Posterior cingulate gyrus (tissue), 11 donors: ENCODE measurements at regions of chr2 and their contacts with region 1.

Region 1: GRCh38 chr2:19362755-19363473 is 4.5 kb upstream of the OSR1 start:
- DNase-seq: peak in 6 of 10 donors; percentile 40 to 91 (median 76)

Region 2: DNA sequence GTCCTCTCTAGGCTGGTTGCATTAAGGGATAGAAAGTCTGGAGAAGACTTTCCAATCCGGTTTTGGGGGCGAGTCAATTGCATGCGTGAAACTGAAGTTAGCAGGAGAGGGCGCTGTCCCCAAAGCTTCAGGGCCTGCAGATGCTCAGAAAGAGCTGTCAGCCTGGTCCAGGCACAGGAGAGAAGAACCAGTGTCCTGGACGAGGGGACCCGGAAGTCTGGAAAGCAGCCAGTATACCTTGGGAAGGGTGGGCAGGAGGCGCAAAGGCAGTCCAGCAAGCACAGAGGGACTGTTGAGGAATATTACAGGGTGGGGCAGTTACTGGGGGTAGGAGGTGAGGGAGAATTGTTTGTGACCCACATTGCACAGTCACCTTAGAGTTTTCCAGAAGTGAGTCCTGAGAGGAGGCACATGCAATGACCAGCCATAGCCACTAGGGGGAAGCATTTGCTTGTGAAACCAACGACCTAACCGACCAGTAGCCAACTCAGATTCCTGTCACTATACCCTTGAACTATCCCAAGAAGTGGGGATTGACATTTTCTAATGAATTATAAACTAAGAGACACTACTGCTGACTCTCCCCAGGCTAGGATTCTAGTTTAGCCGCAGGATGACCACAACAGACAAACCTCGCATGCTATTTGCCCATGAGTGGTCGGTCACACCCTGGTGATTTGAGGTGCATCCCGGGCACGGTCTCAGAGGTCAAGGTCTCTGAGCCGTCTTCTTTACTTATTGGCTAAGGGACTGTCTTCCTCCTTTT is 975.3 kb before region 1 on chr2:
- intact Hi-C with region 1: loop called (anchors 1 kb)
- DNase-seq: peak; percentile 47 to 95 (median 82)

Region 3: DNA sequence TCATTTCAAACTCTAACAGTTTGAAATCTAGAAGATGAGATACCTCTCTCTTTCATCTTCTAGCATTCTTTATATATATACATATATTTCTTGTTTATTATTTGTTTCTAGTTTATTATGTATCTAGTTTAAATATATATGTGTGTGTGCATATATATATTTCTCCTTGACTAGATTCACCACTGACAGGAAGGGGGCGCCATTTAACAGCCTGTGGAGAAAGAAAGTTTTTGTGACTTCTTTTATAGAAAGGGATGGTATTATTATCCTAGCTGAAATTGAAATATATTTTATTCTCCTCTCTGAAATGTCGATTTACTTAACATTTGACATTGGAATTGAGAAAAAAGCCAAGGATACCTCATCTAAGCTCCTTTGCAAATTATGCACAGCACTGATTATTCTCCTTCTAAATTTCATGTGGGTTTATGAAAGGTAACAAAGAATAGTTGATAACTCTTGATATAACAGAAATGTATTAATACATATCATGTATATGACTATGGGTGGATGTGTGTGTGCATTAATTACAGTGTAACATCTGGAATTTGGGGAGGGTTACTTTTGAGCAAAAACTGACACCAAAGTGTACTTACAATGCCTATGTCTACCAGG is 612.9 kb before region 1 on chr2:
- intact Hi-C with region 1: loop called (anchors 5 kb)
- DNase-seq: peak in 5 of 10 donors; percentile 16 to 63 (median 56)

Region 4: GRCh38 chr2:18762667-18763066 is 600.2 kb before region 1 on chr2:
- intact Hi-C with region 1: no loop called
- DNase-seq: no peak

Region 5: DNA sequence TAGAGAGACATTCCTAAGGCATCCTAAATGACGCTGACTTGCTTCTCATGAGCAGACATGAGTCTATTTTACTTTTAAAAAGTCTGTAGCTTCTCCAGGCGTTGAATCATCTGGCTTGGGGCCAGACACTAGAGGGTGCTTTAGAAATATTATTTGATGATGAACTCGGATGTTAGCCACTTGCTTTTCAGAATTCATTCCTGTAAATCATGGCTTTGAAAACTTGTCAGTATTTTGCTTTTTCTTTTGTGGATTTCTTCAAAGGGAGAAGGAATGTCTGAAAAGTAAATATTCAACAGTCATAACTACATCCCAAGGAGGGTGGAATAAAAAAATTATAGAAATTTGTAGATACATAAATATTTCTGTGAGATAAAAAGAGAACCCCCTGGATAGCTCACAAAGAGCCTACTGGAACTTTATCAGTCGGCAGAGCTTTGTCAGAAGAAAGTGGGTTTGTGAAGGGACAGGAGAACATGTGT is 375.3 kb before region 1 on chr2:
- intact Hi-C with region 1: loop called (anchors 5 kb)
- DNase-seq: peak in 5 of 10 donors; percentile 16 to 82 (median 45)